ENCODE measurements at regions of chr1 and their contacts with region 1.

Region 1: DNA sequence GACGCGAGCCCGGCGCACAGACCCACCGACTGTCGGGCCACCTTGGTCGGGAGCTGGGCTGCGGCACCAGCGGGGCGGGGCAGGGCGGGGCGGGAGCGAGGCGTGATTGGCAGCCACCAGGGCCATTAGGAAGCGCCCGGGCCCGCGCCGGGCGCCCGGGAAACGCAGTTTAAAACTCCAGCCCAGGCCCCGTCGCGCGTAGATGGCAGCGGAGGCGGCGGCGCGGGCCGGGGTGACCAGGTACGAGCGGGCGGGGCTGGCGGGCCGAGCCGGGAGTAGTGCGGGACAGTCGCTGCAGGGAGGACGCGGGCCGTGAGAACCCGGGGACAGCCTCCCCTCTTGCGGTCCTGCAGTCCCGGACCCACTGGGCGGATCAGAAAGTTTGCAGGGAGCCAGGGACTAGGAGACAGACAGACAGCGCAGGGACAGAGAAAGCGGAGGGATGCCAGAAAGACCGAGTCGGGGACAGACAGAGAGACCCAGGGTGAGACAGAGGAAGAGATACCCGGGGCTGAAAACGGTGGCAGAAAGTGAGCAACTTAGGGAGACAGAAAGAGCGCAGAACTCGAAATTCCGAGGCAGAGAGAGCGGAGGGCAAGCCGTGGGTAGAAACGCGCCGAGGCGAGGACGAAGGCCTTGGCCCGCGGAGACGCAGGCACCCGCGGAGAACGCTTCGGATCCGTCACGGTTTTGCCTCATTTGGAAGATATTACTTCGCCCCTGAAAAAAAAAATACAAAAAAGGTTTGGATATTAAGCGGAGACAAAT is at the start of gene DMBX1:
- DNase-seq: peak in 1 of 2 experiments; percentile 87
- H3K4me3 ChIP-seq: peak within 1 kb of the TSS; percentile 33 to 64 (median 44)
- H3K27ac ChIP-seq: no peak within 1 kb of the TSS
- H3K4me1 ChIP-seq: peaks cover 14 to 48% (median 42%) of the 10 kb centered on the region in 4 experiments
- H3K27me3 ChIP-seq: peaks cover 91 to 100% (median 99%) of the 10 kb centered on the region in 4 experiments
- CTCF ChIP-seq: no peak
- EP300 ChIP-seq: no peak
- POLR2A ChIP-seq: no peak
- RAD21 ChIP-seq: no peak
- total RNA-seq, gene DMBX1: 0.30 TPM in 1 of 2 replicates, not detected in the other

Region 2: DNA sequence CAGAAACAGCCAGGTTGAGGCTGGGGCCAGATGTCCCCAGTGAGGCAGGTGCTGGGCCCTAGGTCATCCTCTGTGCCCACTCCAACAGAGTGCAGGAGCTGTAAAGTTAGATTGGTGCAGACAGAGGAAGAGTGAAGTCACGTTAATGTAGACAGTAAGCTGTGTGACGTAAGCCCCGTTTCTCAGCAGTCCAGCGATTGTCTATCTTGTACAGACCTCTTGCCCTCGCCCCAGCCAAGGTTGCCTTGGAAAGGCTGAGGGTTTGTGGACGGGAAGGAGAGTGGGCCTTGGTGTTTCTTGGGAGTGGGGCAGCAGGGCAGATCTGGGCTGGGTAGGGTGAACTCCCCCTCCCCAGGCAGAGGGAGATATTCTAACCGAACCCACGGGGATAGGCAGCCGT is 82.2 kb before region 1 on chr1:
- CTCF ChIA-PET with region 1: no interaction called
- POLR2A ChIA-PET with region 1: no interaction called
- DNase-seq: no peak
- H3K4me3 ChIP-seq: no peak overlapping the region
- H3K27ac ChIP-seq: no peak overlapping the region
- H3K4me1 ChIP-seq: peaks cover 0 to 16% (median 12%) of the 10 kb centered on the region in 4 experiments; a peak in 6 of 7 replicates
- H3K27me3 ChIP-seq: no peaks in the 10 kb centered on the region
- CTCF ChIP-seq: no peak
- EP300 ChIP-seq: no peak
- POLR2A ChIP-seq: no peak
- RAD21 ChIP-seq: no peak

Region 3: GRCh38 chr1:46448109-46448911 is 41.5 kb before region 1 on chr1:
- CTCF ChIA-PET with region 1: interaction called, 147 read pairs
- POLR2A ChIA-PET with region 1: interaction called, 8 read pairs
- DNase-seq: peak; percentile 69 to 80
- H3K4me3 ChIP-seq: peak overlapping the region; percentile 41 to 61 (median 54)
- H3K27ac ChIP-seq: no peak overlapping the region
- H3K4me1 ChIP-seq: peaks cover 8 to 31% (median 23%) of the 10 kb centered on the region in 4 experiments
- H3K27me3 ChIP-seq: peaks cover 56 to 72% (median 69%) of the 10 kb centered on the region in 4 experiments
- CTCF ChIP-seq: no peak
- EP300 ChIP-seq: no peak
- POLR2A ChIP-seq: no peak
- RAD21 ChIP-seq: peak in 1 of 2 experiments; percentile 10; a peak in 2 of 4 replicates

Region 4: GRCh38 chr1:46456411-46456963 is 33.3 kb before region 1 on chr1:
- CTCF ChIA-PET with region 1: interaction called, 11 read pairs
- POLR2A ChIA-PET with region 1: interaction called, 3 read pairs
- DNase-seq: no peak
- H3K4me3 ChIP-seq: no peak overlapping the region
- H3K27ac ChIP-seq: no peak overlapping the region
- H3K4me1 ChIP-seq: peaks cover 0 to 15% (median 8%) of the 10 kb centered on the region in 4 experiments; a peak in 6 of 7 replicates
- H3K27me3 ChIP-seq: peaks cover 21 to 59% (median 42%) of the 10 kb centered on the region in 4 experiments
- CTCF ChIP-seq: no peak
- EP300 ChIP-seq: no peak
- POLR2A ChIP-seq: no peak
- RAD21 ChIP-seq: no peak

Region 5: DNA sequence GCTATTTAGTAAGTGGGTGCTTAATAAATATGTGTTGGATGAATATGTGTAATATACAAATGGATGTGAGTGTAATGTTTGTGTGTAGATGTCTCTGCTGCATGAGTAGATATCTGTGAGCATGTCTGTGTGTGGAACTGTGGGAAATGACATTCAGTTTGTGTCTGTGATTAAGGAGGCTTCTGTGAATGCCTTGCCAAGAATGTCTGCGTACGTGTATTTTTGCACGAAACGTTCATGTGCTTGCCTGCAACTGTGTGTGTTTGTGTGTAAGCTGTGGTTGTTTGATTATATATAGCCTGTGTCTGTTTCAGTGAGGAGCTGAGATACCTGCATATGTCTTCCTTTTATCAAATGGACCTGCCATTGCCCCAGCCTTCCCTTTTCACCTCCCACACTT is 13.6 kb after region 1 on chr1:
- CTCF ChIA-PET with region 1: interaction called, 287 read pairs
- POLR2A ChIA-PET with region 1: interaction called, 4 read pairs
- DNase-seq: no peak
- H3K4me3 ChIP-seq: no peak overlapping the region
- H3K27ac ChIP-seq: no peak overlapping the region
- H3K4me1 ChIP-seq: peaks cover 0 to 8% (median 6%) of the 10 kb centered on the region in 4 experiments; a peak in 4 of 7 replicates
- H3K27me3 ChIP-seq: peaks cover 0 to 3% (median under 1%) of the 10 kb centered on the region in 4 experiments; a peak in 4 of 7 replicates
- CTCF ChIP-seq: no peak
- EP300 ChIP-seq: no peak
- POLR2A ChIP-seq: no peak
- RAD21 ChIP-seq: no peak

Region 6: DNA sequence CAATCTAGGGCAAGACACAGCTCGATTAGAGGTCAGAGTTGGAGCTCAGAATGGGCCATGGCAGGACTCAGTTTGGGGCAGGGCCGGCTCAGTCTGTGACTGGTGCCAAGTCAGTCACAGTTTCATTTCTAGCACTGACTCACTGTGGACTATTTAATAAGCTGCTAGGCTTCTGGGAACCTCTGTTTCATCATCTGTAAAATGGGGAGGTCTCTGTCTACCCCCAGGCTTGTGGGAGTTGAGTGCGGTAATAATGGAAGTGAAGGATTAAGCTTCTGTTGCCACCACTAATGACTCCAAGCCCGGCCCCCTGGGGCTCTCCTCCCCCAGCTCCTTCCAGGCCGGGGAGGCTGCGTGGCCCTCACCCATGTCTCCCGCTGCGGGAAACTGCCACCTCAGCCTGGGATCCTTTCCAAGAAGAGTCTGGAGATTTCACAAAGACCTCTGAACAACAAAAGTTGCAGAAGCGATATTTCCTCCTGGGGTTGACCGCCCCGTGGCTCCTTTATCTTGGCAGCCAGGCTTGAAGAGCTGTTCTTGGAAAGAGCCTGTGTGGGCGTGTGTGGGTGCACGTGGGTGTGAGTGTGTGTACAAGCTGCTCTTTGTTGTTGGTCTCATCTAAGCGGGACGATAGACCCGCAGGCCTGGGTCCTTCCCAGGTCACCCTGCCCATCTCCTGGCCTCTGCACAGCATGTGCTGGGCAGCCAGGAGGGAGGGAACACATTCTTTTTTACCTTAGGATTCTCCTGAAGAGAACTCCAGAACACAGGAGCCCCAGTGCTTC is 32.6 kb after region 1 on chr1:
- CTCF ChIA-PET with region 1: interaction called, 1,068 read pairs
- POLR2A ChIA-PET with region 1: interaction called, 9 read pairs
- DNase-seq: peak in 1 of 2 experiments; percentile 45
- H3K4me3 ChIP-seq: no peak overlapping the region
- H3K27ac ChIP-seq: no peak overlapping the region
- H3K4me1 ChIP-seq: peaks cover 24 to 53% (median 34%) of the 10 kb centered on the region in 4 experiments
- H3K27me3 ChIP-seq: peaks cover 9 to 47% (median 42%) of the 10 kb centered on the region in 4 experiments
- CTCF ChIP-seq: no peak
- EP300 ChIP-seq: no peak
- POLR2A ChIP-seq: no peak
- RAD21 ChIP-seq: no peak

Region 7: GRCh38 chr1:46547481-46548383 is 57.9 kb after region 1 on chr1:
- CTCF ChIA-PET with region 1: interaction called, 1,068 read pairs
- POLR2A ChIA-PET with region 1: interaction called, 3 read pairs
- DNase-seq: no peak
- H3K4me3 ChIP-seq: no peak overlapping the region
- H3K27ac ChIP-seq: no peak overlapping the region
- H3K4me1 ChIP-seq: peaks cover 0 to 30% (median 19%) of the 10 kb centered on the region in 4 experiments; a peak in 6 of 7 replicates
- H3K27me3 ChIP-seq: peaks cover 27 to 44% (median 41%) of the 10 kb centered on the region in 4 experiments
- CTCF ChIP-seq: peak in 2 of 3 experiments; percentile 65 to 66; a peak in 3 of 4 replicates
- EP300 ChIP-seq: no peak
- POLR2A ChIP-seq: no peak
- RAD21 ChIP-seq: peak; percentile 60 to 70